T-cell (primary cell): ENCODE measurements at regions of chr3 and their contacts with region 1.

Region 1: DNA sequence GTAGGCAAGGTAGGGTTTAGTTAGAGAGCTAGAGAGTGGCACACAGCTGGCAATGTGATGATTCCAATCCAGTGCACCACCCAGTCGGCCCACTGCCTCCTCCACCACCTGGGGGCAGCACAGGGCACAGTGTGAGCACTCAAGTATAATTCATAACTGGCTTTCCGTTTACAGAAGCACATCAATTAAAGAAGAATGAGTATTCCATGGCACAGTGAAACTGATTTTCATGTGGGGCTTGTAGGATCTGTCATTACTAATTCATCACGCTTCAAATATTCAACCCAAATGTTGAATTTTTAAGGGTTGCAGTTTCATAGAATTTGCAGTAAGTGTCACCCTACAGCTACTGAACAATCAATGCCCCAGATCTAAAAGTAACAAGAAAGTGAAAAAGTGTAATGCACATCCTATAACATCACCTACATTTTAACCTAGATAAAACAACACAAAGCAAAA is 149.9 kb downstream of the IGSF11 start:
- DNase-seq: peak; percentile 41 to 81 (median 71)
- ATAC-seq: peak; percentile 80 to 88 (median 86)
- H3K4me3 ChIP-seq: no peak overlapping the region
- H3K4me3 Mint-ChIP-seq: no peak overlapping the region
- H3K27ac ChIP-seq: no peak overlapping the region
- H3K27ac Mint-ChIP-seq: no peak overlapping the region
- H3K4me1 ChIP-seq: peaks cover 0 to 4% of the 10 kb centered on the region in 2 experiments
- H3K4me1 Mint-ChIP-seq: peaks cover 5 to 12% (median 5%) of the 10 kb centered on the region in 3 donors
- H3K27me3 ChIP-seq: peaks cover 2 to 12% of the 10 kb centered on the region in 2 experiments
- H3K27me3 Mint-ChIP-seq: peaks cover 10 to 19% of the 10 kb centered on the region in 2 donors

Region 2: GRCh38 chr3:119034256-119035013 is 149.7 kb after region 1 on chr3 and contains the start of gene IGSF11:
- CTCF ChIA-PET with region 1: interaction called, 186 to 215 read pairs
- POLR2A ChIA-PET with region 1: interaction called in 1 of 2 experiments, 3 read pairs
- DNase-seq: peak; percentile 11 to 75 (median 50)
- ATAC-seq: peak; percentile 92 to 95 (median 93)
- H3K4me3 ChIP-seq: peak within 1 kb of the TSS; percentile 62 to 90
- H3K4me3 Mint-ChIP-seq: peak within 1 kb of the TSS; percentile 86 to 90 (median 87)
- H3K27ac ChIP-seq: no peak within 1 kb of the TSS
- H3K27ac Mint-ChIP-seq: no peak within 1 kb of the TSS
- H3K4me1 ChIP-seq: peaks cover 2 to 9% of the 10 kb centered on the region in 2 experiments
- H3K4me1 Mint-ChIP-seq: peaks cover 8 to 14% (median 14%) of the 10 kb centered on the region in 3 donors
- H3K27me3 ChIP-seq: peaks cover 6 to 21% of the 10 kb centered on the region in 2 experiments
- H3K27me3 Mint-ChIP-seq: peaks cover 38 to 45% of the 10 kb centered on the region in 2 donors
- total RNA-seq, gene IGSF11: 0.20 to 0.70 (median 0.41) TPM

Region 3: GRCh38 chr3:119098619-119099222 is 213.9 kb after region 1 on chr3:
- CTCF ChIA-PET with region 1: interaction called, 234 to 237 read pairs
- POLR2A ChIA-PET with region 1: no interaction called
- DNase-seq: peak in 5 of 35 experiments; percentile 0 to 69 (median 13)
- ATAC-seq: peak in 1 of 4 experiments; percentile 51
- H3K4me3 ChIP-seq: no peak overlapping the region
- H3K4me3 Mint-ChIP-seq: no peak overlapping the region
- H3K27ac ChIP-seq: no peak overlapping the region
- H3K27ac Mint-ChIP-seq: no peak overlapping the region
- H3K4me1 ChIP-seq: no peaks in the 10 kb centered on the region
- H3K4me1 Mint-ChIP-seq: no peaks in the 10 kb centered on the region
- H3K27me3 ChIP-seq: no peaks in the 10 kb centered on the region
- H3K27me3 Mint-ChIP-seq: no peaks in the 10 kb centered on the region

Region 4: DNA sequence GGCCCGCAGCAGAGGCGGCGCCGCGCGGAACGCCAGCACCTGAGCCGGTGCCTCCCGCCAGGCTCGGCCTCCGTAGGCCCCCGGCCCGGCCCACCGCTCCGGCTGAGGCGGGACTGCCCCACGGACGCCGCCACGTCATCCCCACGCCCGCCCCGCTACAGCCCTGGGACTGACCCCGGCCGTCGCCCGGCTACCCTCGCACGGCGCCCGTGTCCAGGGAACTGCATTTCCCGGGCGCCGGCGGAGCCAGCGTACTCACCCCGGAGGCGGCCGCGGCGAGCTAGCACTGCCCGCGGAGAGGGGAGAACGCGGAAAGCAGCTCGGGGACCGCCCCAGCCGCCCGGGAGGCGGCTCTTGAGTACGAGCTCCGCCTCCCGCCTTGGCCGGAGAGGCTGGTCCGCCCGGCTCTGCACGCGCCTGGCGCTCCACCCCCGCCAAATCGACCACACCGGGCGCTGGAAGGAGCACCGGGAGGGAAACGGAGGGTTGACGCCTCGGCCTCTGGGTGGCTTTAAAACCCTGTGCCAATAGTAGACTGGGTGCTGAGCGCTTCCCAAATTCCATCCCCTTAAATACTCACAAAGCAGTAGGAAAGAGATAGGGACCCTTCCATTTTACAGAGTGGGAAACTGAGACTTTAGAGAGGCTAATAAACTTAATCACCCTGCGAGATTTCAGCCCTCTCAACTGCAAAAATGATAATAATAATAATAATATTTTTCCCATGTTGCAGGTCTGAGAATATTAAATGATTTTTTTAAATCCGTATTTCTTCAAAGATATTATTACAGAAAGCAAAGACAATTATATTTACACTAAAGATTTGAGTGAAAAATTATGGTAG is 356.0 kb after region 1 on chr3 and contains the start of gene B4GALT4:
- CTCF ChIA-PET with region 1: interaction called, 21 to 51 read pairs
- POLR2A ChIA-PET with region 1: no interaction called
- DNase-seq: peak; percentile 7 to 74 (median 55)
- ATAC-seq: peak; percentile 75 to 80 (median 79)
- H3K4me3 ChIP-seq: peak within 1 kb of the TSS; percentile 67 to 84
- H3K4me3 Mint-ChIP-seq: peak within 1 kb of the TSS; percentile 82 to 89 (median 83)
- H3K27ac ChIP-seq: peak within 1 kb of the TSS; percentile 74
- H3K27ac Mint-ChIP-seq: peak within 1 kb of the TSS; percentile 82 to 94
- H3K4me1 ChIP-seq: peaks cover 27 to 30% of the 10 kb centered on the region in 2 experiments
- H3K4me1 Mint-ChIP-seq: peaks cover 42 to 45% (median 42%) of the 10 kb centered on the region in 3 donors
- H3K27me3 ChIP-seq: no peaks in the 10 kb centered on the region
- H3K27me3 Mint-ChIP-seq: no peaks in the 10 kb centered on the region
- total RNA-seq, gene B4GALT4: 14.0 to 33.7 (median 18.2) TPM

Region 5: GRCh38 chr3:119681279-119681678 is 796.5 kb after region 1 on chr3:
- CTCF ChIA-PET with region 1: interaction called, 7 to 16 read pairs
- POLR2A ChIA-PET with region 1: no interaction called
- DNase-seq: peak in 1 of 35 experiments; percentile 39
- ATAC-seq: no peak
- H3K4me3 ChIP-seq: no peak overlapping the region
- H3K4me3 Mint-ChIP-seq: no peak overlapping the region
- H3K27ac ChIP-seq: no peak overlapping the region
- H3K27ac Mint-ChIP-seq: no peak overlapping the region
- H3K4me1 ChIP-seq: peaks cover 7 to 10% of the 10 kb centered on the region in 2 experiments
- H3K4me1 Mint-ChIP-seq: peaks cover 12 to 14% (median 12%) of the 10 kb centered on the region in 3 donors
- H3K27me3 ChIP-seq: no peaks in the 10 kb centered on the region
- H3K27me3 Mint-ChIP-seq: no peaks in the 10 kb centered on the region